ENCODE measurements at regions of chr1 and their contacts with region 1.

Region 1: DNA sequence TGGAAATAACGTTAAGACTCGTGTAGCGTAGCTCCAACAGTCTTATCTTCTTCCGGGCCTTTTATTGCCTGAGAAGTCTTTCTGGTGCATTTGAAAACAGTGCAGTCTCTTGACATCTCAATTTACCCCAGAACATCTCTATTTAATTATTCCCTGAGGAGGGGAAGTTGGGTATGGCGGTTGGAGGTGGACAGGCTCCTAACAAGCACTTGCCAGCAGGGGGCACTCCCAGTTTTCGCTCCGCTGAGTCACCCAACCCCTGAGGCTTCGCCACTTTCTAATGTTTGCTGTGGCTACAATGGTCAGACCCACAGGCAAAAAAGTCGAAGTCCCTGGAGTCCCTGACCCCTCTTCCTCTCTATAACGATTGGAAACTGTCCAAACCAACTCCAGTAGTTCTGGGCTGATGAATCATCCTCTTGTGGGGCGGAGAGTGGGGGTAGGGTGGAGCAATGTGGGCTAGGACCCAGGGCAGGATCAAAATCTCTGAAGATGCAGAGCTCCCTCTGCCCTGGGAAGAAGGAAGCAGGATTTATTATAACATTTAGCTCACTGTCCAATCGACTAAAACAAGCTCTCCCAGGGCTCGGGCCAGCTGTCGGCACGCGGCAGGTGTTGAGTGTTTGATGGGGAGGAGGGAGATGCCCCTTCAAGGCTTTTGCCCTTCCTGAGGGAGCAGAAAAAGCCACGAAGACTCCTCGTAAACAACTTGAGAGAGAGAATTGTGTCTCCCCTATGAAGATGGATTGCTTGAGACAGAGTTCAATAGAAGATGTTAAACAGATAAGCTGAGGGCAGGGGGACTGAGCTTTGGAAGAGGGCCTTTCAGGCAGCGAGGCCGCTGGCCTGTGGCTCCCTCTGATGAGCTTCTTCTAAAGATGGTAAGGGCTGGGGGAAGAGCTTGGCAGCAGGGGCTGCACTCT is 85.7 kb downstream of the BRINP2 start:
- DNase-seq: peak; percentile 49 to 88
- H3K4me3 ChIP-seq: no peak overlapping the region
- H3K27ac ChIP-seq: no peak overlapping the region
- H3K4me1 ChIP-seq: peaks cover 0 to 4% (median 0%) of the 10 kb centered on the region in 4 experiments; a peak in 2 of 7 replicates
- H3K27me3 ChIP-seq: no peaks in the 10 kb centered on the region
- CTCF ChIP-seq: peak; percentile 63 to 70 (median 69)
- EP300 ChIP-seq: no peak
- POLR2A ChIP-seq: no peak
- RAD21 ChIP-seq: peak; percentile 79

Region 2: DNA sequence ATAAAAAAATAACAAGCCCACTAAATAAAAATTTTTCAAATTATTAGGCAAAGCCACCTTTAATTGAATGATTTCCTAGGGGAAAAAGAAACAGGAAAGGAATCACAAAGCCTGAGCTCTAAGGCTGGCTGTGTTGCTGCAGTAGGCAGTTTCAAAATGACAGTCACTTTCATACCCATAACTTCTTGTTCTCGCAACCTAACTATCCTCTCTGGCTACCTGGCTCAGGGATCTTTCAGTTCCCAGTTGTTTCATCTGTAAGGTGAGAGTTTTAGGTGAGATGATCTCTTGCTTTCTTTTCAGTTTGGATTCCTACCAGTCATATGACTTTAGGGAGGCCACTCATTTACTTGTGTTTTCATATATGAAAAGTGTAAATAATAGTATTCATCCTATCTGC is 318.0 kb before region 1 on chr1:
- CTCF ChIA-PET with region 1: no interaction called
- POLR2A ChIA-PET with region 1: no interaction called
- DNase-seq: no peak
- H3K4me3 ChIP-seq: no peak overlapping the region
- H3K27ac ChIP-seq: no peak overlapping the region
- H3K4me1 ChIP-seq: peaks cover 0 to 4% (median 1%) of the 10 kb centered on the region in 4 experiments; a peak in 1 of 7 replicates
- H3K27me3 ChIP-seq: no peaks in the 10 kb centered on the region
- CTCF ChIP-seq: no peak
- EP300 ChIP-seq: no peak
- POLR2A ChIP-seq: no peak
- RAD21 ChIP-seq: no peak

Region 3: DNA sequence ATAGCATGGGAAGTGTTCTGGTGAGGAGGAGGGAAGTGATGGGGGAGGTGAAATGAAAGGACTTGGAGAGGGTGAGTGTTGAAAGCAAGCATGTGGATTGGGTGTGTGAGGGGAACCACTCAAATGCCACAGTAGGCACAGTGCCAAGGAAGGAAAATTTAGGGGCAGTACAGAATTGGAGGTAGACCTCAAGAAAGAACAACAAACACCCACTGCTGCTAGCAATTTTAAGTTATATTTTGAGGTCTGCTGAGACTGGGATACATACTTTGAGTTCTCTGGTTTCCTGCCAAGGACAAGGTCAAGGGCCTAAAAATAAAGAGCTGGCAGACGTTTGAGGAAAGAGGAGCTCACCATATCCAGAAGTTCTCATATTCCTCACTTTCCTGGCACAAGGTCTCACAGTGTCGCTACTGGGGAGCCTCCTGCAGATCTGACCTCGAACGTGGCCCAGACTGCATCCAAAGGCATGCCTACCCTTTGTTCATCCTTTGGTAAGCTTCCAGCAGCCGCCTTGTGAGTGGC is 18.3 kb after region 1 on chr1:
- CTCF ChIA-PET with region 1: interaction called, 55 read pairs
- POLR2A ChIA-PET with region 1: no interaction called
- DNase-seq: no peak
- H3K4me3 ChIP-seq: no peak overlapping the region
- H3K27ac ChIP-seq: no peak overlapping the region
- H3K4me1 ChIP-seq: no peaks in the 10 kb centered on the region
- H3K27me3 ChIP-seq: no peaks in the 10 kb centered on the region
- CTCF ChIP-seq: no peak
- EP300 ChIP-seq: no peak
- POLR2A ChIP-seq: no peak
- RAD21 ChIP-seq: no peak

Region 4: GRCh38 chr1:177302357-177303044 is 46.1 kb after region 1 on chr1:
- CTCF ChIA-PET with region 1: interaction called, 24 read pairs
- POLR2A ChIA-PET with region 1: no interaction called
- DNase-seq: no peak
- H3K4me3 ChIP-seq: no peak overlapping the region
- H3K27ac ChIP-seq: no peak overlapping the region
- H3K4me1 ChIP-seq: no peaks in the 10 kb centered on the region; a peak in 3 of 7 replicates
- H3K27me3 ChIP-seq: no peaks in the 10 kb centered on the region
- CTCF ChIP-seq: no peak
- EP300 ChIP-seq: no peak
- POLR2A ChIP-seq: no peak
- RAD21 ChIP-seq: no peak

Region 5: GRCh38 chr1:177368255-177368654 is 111.8 kb after region 1 on chr1:
- CTCF ChIA-PET with region 1: interaction called, 10 read pairs
- POLR2A ChIA-PET with region 1: no interaction called
- DNase-seq: no peak
- H3K4me3 ChIP-seq: no peak overlapping the region
- H3K27ac ChIP-seq: no peak overlapping the region
- H3K4me1 ChIP-seq: no peaks in the 10 kb centered on the region
- H3K27me3 ChIP-seq: no peaks in the 10 kb centered on the region
- CTCF ChIP-seq: no peak
- EP300 ChIP-seq: no peak
- POLR2A ChIP-seq: no peak
- RAD21 ChIP-seq: no peak

Region 6: DNA sequence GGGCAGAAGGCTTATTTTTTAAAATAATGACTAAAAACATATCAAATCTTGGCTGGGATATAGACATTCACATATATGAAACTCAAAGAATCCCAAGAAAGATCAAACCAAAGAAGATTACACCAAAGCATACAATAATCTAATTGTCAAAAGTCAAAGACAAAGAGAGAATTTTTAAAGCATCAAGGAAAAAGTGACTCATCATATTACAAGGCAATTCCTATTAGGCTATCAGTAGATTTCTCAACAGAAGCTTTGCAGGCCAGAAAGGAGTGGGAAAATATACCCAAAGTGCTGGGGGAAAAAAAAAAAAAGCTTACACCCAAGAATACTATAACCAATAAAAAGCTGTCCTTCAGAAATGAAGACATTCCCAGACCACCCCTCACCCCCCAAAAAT is 289.9 kb after region 1 on chr1:
- CTCF ChIA-PET with region 1: no interaction called
- POLR2A ChIA-PET with region 1: no interaction called
- DNase-seq: no peak
- H3K4me3 ChIP-seq: no peak overlapping the region
- H3K27ac ChIP-seq: no peak overlapping the region
- H3K4me1 ChIP-seq: no peaks in the 10 kb centered on the region
- H3K27me3 ChIP-seq: no peaks in the 10 kb centered on the region; a peak in 1 of 7 replicates
- CTCF ChIP-seq: no peak
- EP300 ChIP-seq: no peak
- POLR2A ChIP-seq: no peak
- RAD21 ChIP-seq: no peak